IMR-90 (cell line): ENCODE measurements at regions of chr9 and their contacts with region 1.

Region 1: DNA sequence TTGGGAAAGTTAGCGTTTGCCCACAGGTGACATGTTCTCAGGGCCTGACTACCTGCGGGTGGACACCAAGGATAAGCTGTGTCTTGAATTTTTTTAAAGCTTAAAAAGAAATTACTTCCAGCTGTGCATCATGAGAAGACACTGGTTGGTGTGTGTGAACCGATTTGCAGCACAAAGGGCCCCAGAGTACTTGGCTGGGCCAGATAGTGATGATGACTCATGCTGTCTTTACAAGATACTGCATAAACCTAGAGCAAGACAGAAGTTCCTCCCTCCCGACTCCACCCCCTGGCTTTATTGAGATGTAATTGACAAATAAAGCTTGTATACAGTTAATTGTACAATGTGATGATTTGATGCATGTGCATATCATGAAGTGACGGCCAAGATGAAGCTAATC is 212.8 kb downstream of the NXNL2 start:
- DNase-seq: peak; percentile 96
- ATAC-seq: peak; percentile 50
- H3K4me3 ChIP-seq: no peak overlapping the region
- H3K27ac ChIP-seq: peak overlapping the region; percentile 93
- H3K4me1 ChIP-seq: peaks cover 35% of the 10 kb centered on the region
- H3K27me3 ChIP-seq: no peaks in the 10 kb centered on the region
- CTCF ChIP-seq: no peak
- POLR2A ChIP-seq: no peak
- RAD21 ChIP-seq: peak; percentile 10; the same call in 1 of the 2 replicates

Region 2: GRCh38 chr9:88766778-88767503 is 19.2 kb after region 1 on chr9:
- CTCF ChIA-PET with region 1: no interaction called
- POLR2A ChIA-PET with region 1: no interaction called
- dilution Hi-C with region 1: no loop called
- in situ Hi-C with region 1: no loop called
- intact Hi-C with region 1: loop called (anchors 2 kb)
- DNase-seq: peak; percentile 86
- ATAC-seq: peak; percentile 86
- H3K4me3 ChIP-seq: no peak overlapping the region
- H3K27ac ChIP-seq: no peak overlapping the region
- H3K4me1 ChIP-seq: peaks cover 9% of the 10 kb centered on the region
- H3K27me3 ChIP-seq: no peaks in the 10 kb centered on the region
- CTCF ChIP-seq: no peak
- POLR2A ChIP-seq: no peak
- RAD21 ChIP-seq: no peak; the same call in 1 of the 2 replicates

Region 3: DNA sequence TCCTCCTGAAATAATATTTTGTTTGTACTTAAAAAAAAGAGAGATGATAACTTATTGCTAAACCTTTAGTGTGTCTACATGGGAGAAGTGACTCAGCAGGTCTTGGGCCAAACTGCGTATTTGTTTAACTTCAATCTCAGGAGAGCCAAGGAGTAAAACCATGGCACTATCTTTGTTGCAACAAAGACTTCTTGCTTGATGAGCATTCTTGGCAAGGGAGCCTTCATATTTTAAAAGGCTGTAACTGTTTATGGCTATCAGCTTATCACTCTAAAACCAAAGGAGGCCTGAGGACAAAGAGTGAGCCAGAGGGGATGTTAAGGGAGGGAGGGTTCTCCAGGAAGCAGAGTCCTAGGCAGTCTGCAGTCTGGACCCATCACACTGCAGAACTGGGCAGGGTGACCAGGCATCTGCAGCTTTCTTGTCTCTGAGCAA is 27.3 kb after region 1 on chr9:
- CTCF ChIA-PET with region 1: no interaction called
- POLR2A ChIA-PET with region 1: no interaction called
- dilution Hi-C with region 1: no loop called
- in situ Hi-C with region 1: no loop called
- intact Hi-C with region 1: loop called (anchors 2 kb)
- DNase-seq: peak; percentile 98
- ATAC-seq: peak; percentile 76
- H3K4me3 ChIP-seq: no peak overlapping the region
- H3K27ac ChIP-seq: peak overlapping the region; percentile 82
- H3K4me1 ChIP-seq: peaks cover 36% of the 10 kb centered on the region
- H3K27me3 ChIP-seq: no peaks in the 10 kb centered on the region
- CTCF ChIP-seq: no peak
- POLR2A ChIP-seq: no peak
- RAD21 ChIP-seq: no peak

Region 4: GRCh38 chr9:88889386-88889785 is 141.6 kb after region 1 on chr9:
- CTCF ChIA-PET with region 1: no interaction called
- POLR2A ChIA-PET with region 1: no interaction called
- dilution Hi-C with region 1: no loop called
- in situ Hi-C with region 1: no loop called
- intact Hi-C with region 1: no loop called
- DNase-seq: peak; percentile 32
- ATAC-seq: no peak
- H3K4me3 ChIP-seq: no peak overlapping the region
- H3K27ac ChIP-seq: no peak overlapping the region
- H3K4me1 ChIP-seq: 0 out of 2 replicates have a peak, but pooled peaks cover 2% of the 10 kb centered on the region
- H3K27me3 ChIP-seq: no peaks in the 10 kb centered on the region; the same call in 1 of the 2 replicates
- CTCF ChIP-seq: no peak
- POLR2A ChIP-seq: no peak
- RAD21 ChIP-seq: no peak

Region 5: GRCh38 chr9:88953381-88954029 is 205.7 kb after region 1 on chr9:
- CTCF ChIA-PET with region 1: no interaction called
- POLR2A ChIA-PET with region 1: no interaction called
- dilution Hi-C with region 1: no loop called
- in situ Hi-C with region 1: no loop called
- intact Hi-C with region 1: loop called (anchors 5 kb)
- DNase-seq: peak; percentile 73
- ATAC-seq: peak; percentile 62
- H3K4me3 ChIP-seq: no peak overlapping the region
- H3K27ac ChIP-seq: peak overlapping the region; percentile 16; the same call in 1 of the 2 replicates
- H3K4me1 ChIP-seq: peaks cover 24% of the 10 kb centered on the region
- H3K27me3 ChIP-seq: peaks cover 11% of the 10 kb centered on the region
- CTCF ChIP-seq: no peak
- POLR2A ChIP-seq: no peak
- RAD21 ChIP-seq: no peak

Region 6: GRCh38 chr9:89077519-89077918 is 329.8 kb after region 1 on chr9:
- CTCF ChIA-PET with region 1: no interaction called
- POLR2A ChIA-PET with region 1: no interaction called
- dilution Hi-C with region 1: no loop called
- in situ Hi-C with region 1: no loop called
- intact Hi-C with region 1: no loop called
- DNase-seq: no peak
- ATAC-seq: no peak
- H3K4me3 ChIP-seq: no peak overlapping the region
- H3K27ac ChIP-seq: no peak overlapping the region
- H3K4me1 ChIP-seq: peaks cover 12% of the 10 kb centered on the region
- H3K27me3 ChIP-seq: no peaks in the 10 kb centered on the region
- CTCF ChIP-seq: no peak
- POLR2A ChIP-seq: no peak
- RAD21 ChIP-seq: no peak